ENCODE measurements at regions of chr20 and their contacts with region 1.

Region 1: GRCh38 chr20:8722276-8722928 is 346.5 kb upstream of the PLCB4 start:
- DNase-seq: peak; percentile 13
- H3K4me3 Mint-ChIP-seq: no peak overlapping the region
- H3K27ac Mint-ChIP-seq: no peak overlapping the region
- H3K4me1 Mint-ChIP-seq: no peaks in the 10 kb centered on the region
- H3K27me3 Mint-ChIP-seq: no peaks in the 10 kb centered on the region

Region 2: GRCh38 chr20:7980332-7981046 is 741.9 kb before region 1 on chr20:
- CTCF ChIA-PET with region 1: interaction called, 25 read pairs
- POLR2A ChIA-PET with region 1: no interaction called
- intact Hi-C with region 1: no loop called
- DNase-seq: peak; percentile 44
- H3K4me3 Mint-ChIP-seq: no peak overlapping the region
- H3K27ac Mint-ChIP-seq: peak overlapping the region; percentile 43
- H3K4me1 Mint-ChIP-seq: peaks cover 12% of the 10 kb centered on the region
- H3K27me3 Mint-ChIP-seq: no peaks in the 10 kb centered on the region

Region 3: GRCh38 chr20:8131598-8132483 is 590.6 kb before region 1 on chr20 and contains the start of gene PLCB1:
- CTCF ChIA-PET with region 1: interaction called, 18 read pairs
- POLR2A ChIA-PET with region 1: no interaction called
- intact Hi-C with region 1: loop called (anchors 1 kb)
- DNase-seq: peak; percentile 85
- H3K4me3 Mint-ChIP-seq: peak within 1 kb of the TSS; percentile 76
- H3K27ac Mint-ChIP-seq: no peak within 1 kb of the TSS
- H3K4me1 Mint-ChIP-seq: peaks cover 17% of the 10 kb centered on the region
- H3K27me3 Mint-ChIP-seq: peaks cover 33% of the 10 kb centered on the region
- total RNA-seq, gene PLCB1: 3.9 to 4.0 TPM

Region 4: GRCh38 chr20:8389381-8390036 is 332.9 kb before region 1 on chr20:
- CTCF ChIA-PET with region 1: interaction called, 28 read pairs
- POLR2A ChIA-PET with region 1: no interaction called
- intact Hi-C with region 1: loop called (anchors 5 kb)
- DNase-seq: no peak
- H3K4me3 Mint-ChIP-seq: no peak overlapping the region
- H3K27ac Mint-ChIP-seq: no peak overlapping the region
- H3K4me1 Mint-ChIP-seq: no peaks in the 10 kb centered on the region
- H3K27me3 Mint-ChIP-seq: no peaks in the 10 kb centered on the region

Region 5: GRCh38 chr20:8735674-8736073 is 13.3 kb after region 1 on chr20:
- CTCF ChIA-PET with region 1: interaction called, 19 read pairs
- POLR2A ChIA-PET with region 1: no interaction called
- intact Hi-C with region 1: no loop called
- DNase-seq: no peak
- H3K4me3 Mint-ChIP-seq: no peak overlapping the region
- H3K27ac Mint-ChIP-seq: no peak overlapping the region
- H3K4me1 Mint-ChIP-seq: peaks cover 5% of the 10 kb centered on the region
- H3K27me3 Mint-ChIP-seq: no peaks in the 10 kb centered on the region

Region 6: GRCh38 chr20:8798505-8798904 is 76.1 kb after region 1 on chr20:
- CTCF ChIA-PET with region 1: no interaction called
- POLR2A ChIA-PET with region 1: no interaction called
- intact Hi-C with region 1: no loop called
- DNase-seq: no peak
- H3K4me3 Mint-ChIP-seq: no peak overlapping the region
- H3K27ac Mint-ChIP-seq: no peak overlapping the region
- H3K4me1 Mint-ChIP-seq: no peaks in the 10 kb centered on the region
- H3K27me3 Mint-ChIP-seq: no peaks in the 10 kb centered on the region

Measured in activated CD4-positive, alpha-beta memory T cell treated with anti-CD3 and anti-CD28 coated beads for 36 hours (primary cell).